ENCODE measurements at regions of chr15 and their contacts with region 1.

Region 1: GRCh38 chr15:44738340-44738984 is 2.1 kb downstream of the TRIM69 start:
- DNase-seq: peak; percentile 21 to 58 (median 36)
- ATAC-seq: no peak
- H3K4me3 ChIP-seq: no peak overlapping the region
- H3K27ac ChIP-seq: no peak overlapping the region
- H3K4me1 ChIP-seq: peaks cover 6 to 18% of the 10 kb centered on the region in 2 experiments; a peak in 4 of 5 replicates
- H3K27me3 ChIP-seq: no peaks in the 10 kb centered on the region
- CTCF ChIP-seq: peak; percentile 62 to 89 (median 65); a peak in 5 of 6 replicates
- EP300 ChIP-seq: no peak
- POLR2A ChIP-seq: no peak
- RAD21 ChIP-seq: peak; percentile 90 to 96

Region 2: DNA sequence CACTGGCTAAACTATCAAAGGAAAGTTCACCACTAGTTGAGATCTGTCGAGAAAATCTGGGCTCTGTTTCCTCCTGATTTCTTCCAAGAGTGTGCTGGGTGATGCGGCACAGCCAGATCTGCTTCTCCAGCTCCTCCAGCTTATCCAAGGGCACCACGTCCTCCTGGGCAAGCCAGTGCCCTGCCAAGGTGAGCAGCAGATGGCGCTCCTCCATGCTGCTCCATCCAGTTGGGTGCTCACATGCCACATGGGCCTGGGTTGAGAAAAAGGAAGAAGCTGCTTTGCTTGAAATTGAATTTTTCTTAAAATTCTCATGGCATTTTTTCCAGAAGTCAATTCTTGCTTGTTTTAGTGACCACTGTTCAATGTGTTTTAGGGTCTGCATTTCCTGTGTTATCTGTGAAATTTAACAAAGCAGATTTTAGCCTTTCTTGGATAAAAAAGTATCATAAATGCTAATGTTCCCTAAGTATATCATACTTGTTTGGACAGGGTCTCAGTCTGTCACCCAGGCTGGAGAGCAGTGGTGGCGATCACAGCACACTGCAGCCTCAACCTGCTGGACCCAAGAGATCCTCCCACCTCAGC is 154.2 kb before region 1 on chr15:
- CTCF ChIA-PET with region 1: no interaction called
- POLR2A ChIA-PET with region 1: interaction called, 5 read pairs
- in situ Hi-C with region 1: loop called (anchors 5 kb)
- intact Hi-C with region 1: no loop called
- DNase-seq: peak in 1 of 4 experiments; percentile 22
- ATAC-seq: peak; percentile 63; the same call in 2 of the 3 replicates
- H3K4me3 ChIP-seq: no peak overlapping the region
- H3K27ac ChIP-seq: no peak overlapping the region
- H3K4me1 ChIP-seq: no peaks in the 10 kb centered on the region
- H3K27me3 ChIP-seq: no peaks in the 10 kb centered on the region
- CTCF ChIP-seq: peak; percentile 9 to 49 (median 31); a peak in 4 of 6 replicates
- EP300 ChIP-seq: no peak
- POLR2A ChIP-seq: no peak
- RAD21 ChIP-seq: no peak

Region 3: GRCh38 chr15:44593042-44593736 is 145.3 kb before region 1 on chr15:
- CTCF ChIA-PET with region 1: no interaction called
- POLR2A ChIA-PET with region 1: no interaction called
- in situ Hi-C with region 1: no loop called
- intact Hi-C with region 1: loop called (anchors 2 kb)
- DNase-seq: peak in 1 of 4 experiments; percentile 32
- ATAC-seq: peak; percentile 90
- H3K4me3 ChIP-seq: no peak overlapping the region
- H3K27ac ChIP-seq: no peak overlapping the region
- H3K4me1 ChIP-seq: no peaks in the 10 kb centered on the region
- H3K27me3 ChIP-seq: no peaks in the 10 kb centered on the region
- CTCF ChIP-seq: peak in 2 of 3 experiments; percentile 39 to 66; a peak in 4 of 6 replicates
- EP300 ChIP-seq: no peak
- POLR2A ChIP-seq: no peak
- RAD21 ChIP-seq: peak in 1 of 2 experiments; percentile 47; a peak in 3 of 4 replicates

Region 4: DNA sequence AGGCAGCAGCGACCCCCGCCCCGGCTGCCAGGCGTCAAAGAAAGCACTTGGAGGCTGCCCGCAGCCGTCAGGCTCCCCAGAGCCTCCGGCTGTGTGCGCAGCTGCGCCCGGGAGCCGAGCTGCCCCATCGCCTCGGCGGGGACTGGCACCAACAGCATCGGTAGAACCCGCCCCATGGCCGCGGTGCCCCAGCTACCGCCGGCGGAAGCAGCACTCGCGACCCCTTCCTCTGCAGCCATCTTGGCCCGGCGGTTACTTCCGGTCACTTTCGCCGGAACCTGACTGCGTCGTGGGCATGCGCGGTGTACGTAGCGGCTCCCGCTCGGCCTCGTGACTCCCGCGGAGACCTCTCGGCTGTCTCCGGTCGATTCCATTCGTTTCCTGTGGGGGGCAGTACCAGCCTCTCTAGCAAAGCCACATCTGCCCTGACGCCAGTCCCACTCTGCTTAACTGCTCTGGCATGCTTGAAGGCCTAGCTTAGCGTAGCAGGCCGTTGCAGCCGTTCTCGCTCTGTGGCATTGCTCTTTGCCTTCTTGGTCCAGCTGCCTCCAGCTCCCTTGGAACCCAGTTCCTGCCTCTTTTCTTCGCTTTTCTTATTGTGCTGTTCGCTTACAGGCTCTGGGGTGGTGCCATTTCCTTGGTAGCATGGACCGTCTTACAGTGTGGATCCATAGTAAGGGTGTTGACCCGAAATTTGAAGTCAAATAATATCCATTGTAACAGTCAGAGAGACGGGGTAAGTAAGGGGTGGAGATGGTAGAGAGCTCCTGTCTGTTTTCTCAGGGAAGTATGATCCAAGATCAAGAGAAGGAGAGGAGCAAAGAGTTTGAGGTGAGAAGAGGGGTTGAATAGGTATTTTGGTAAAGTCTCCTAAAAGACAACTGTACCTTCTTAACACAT is 74.8 kb before region 1 on chr15 and contains the start of gene SPG11:
- CTCF ChIA-PET with region 1: interaction called, 7 read pairs
- POLR2A ChIA-PET with region 1: interaction called, 18 read pairs
- in situ Hi-C with region 1: no loop called
- intact Hi-C with region 1: loop called (anchors 1 kb)
- DNase-seq: peak; percentile 94 to 99 (median 96)
- ATAC-seq: peak; percentile 95
- H3K4me3 ChIP-seq: peak within 1 kb of the TSS; percentile 93
- H3K27ac ChIP-seq: peak within 1 kb of the TSS; percentile 95
- H3K4me1 ChIP-seq: peaks cover 10 to 18% of the 10 kb centered on the region in 2 experiments
- H3K27me3 ChIP-seq: no peaks in the 10 kb centered on the region
- CTCF ChIP-seq: peak; percentile 91 to 98 (median 93)
- EP300 ChIP-seq: no peak
- POLR2A ChIP-seq: peak; percentile 97
- RAD21 ChIP-seq: peak; percentile 97 to 98
- polyA plus RNA-seq, gene SPG11: 23.3 to 24.0 TPM

Region 5: DNA sequence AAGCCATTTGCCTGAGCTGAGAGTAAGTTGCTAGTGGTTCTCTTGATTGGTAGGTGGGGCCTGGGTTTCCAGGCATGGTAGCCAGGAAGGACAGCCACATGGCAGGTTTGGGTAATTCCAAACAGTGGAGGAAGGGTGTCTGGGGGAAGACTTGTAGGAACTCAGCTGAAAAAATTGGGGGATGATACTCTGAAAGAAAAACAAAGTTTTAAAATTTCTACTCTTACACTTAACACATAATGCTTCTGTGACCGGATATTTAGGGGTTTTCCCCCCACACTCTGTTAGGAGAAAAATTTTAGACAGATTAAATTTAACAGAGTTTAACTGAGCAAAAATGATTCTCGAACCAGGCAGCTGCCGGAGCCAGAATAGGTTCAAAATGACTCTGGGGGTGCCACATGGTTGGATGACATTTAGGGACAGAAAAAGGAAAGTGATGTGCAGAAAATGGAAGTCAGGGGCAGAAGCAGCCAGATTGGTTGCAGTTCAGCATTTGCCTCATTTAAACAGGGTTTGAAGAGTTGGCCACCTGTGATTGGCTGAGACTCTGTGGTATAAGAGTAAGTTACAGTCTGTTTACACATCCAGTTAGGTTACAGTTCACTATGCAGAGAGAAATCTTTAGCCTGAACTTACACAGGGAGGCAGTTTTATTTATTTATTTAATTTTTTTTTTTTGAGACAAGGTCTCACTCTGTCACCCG is 19.0 kb before region 1 on chr15:
- CTCF ChIA-PET with region 1: interaction called, 9 read pairs
- POLR2A ChIA-PET with region 1: interaction called, 44 read pairs
- in situ Hi-C with region 1: no loop called
- intact Hi-C with region 1: no loop called
- DNase-seq: peak in 1 of 4 experiments; percentile 13
- ATAC-seq: peak; percentile 74
- H3K4me3 ChIP-seq: no peak overlapping the region
- H3K27ac ChIP-seq: peak overlapping the region; percentile 39; the same call in 2 of the 3 replicates
- H3K4me1 ChIP-seq: no peaks in the 10 kb centered on the region; a peak in 3 of 5 replicates
- H3K27me3 ChIP-seq: no peaks in the 10 kb centered on the region
- CTCF ChIP-seq: no peak
- EP300 ChIP-seq: no peak
- POLR2A ChIP-seq: peak; percentile 61; the same call in 1 of the 2 replicates
- RAD21 ChIP-seq: no peak

Region 6: GRCh38 chr15:44873103-44873502 is 134.6 kb after region 1 on chr15:
- CTCF ChIA-PET with region 1: no interaction called
- POLR2A ChIA-PET with region 1: no interaction called
- in situ Hi-C with region 1: no loop called
- intact Hi-C with region 1: no loop called
- DNase-seq: no peak
- ATAC-seq: no peak
- H3K4me3 ChIP-seq: no peak overlapping the region
- H3K27ac ChIP-seq: no peak overlapping the region
- H3K4me1 ChIP-seq: no peaks in the 10 kb centered on the region
- H3K27me3 ChIP-seq: no peaks in the 10 kb centered on the region
- CTCF ChIP-seq: no peak
- EP300 ChIP-seq: no peak
- POLR2A ChIP-seq: no peak
- RAD21 ChIP-seq: no peak